BJ (cell line): ENCODE measurements at regions of chr9 and their contacts with region 1.

Region 1: GRCh38 chr9:21317956-21318923 is 13.1 kb upstream of the IFNA5 start:
- DNase-seq: no peak
- H3K4me3 ChIP-seq: no peak overlapping the region
- H3K27me3 ChIP-seq: no peaks in the 10 kb centered on the region
- CTCF ChIP-seq: peak; percentile 69

Region 2: GRCh38 chr9:21294325-21294724 is 23.9 kb before region 1 on chr9:
- CTCF ChIA-PET with region 1: no interaction called
- POLR2A ChIA-PET with region 1: no interaction called
- DNase-seq: no peak
- H3K4me3 ChIP-seq: no peak overlapping the region
- H3K27me3 ChIP-seq: peaks cover 3% of the 10 kb centered on the region; the same call in 1 of the 2 replicates
- CTCF ChIP-seq: no peak

Region 3: DNA sequence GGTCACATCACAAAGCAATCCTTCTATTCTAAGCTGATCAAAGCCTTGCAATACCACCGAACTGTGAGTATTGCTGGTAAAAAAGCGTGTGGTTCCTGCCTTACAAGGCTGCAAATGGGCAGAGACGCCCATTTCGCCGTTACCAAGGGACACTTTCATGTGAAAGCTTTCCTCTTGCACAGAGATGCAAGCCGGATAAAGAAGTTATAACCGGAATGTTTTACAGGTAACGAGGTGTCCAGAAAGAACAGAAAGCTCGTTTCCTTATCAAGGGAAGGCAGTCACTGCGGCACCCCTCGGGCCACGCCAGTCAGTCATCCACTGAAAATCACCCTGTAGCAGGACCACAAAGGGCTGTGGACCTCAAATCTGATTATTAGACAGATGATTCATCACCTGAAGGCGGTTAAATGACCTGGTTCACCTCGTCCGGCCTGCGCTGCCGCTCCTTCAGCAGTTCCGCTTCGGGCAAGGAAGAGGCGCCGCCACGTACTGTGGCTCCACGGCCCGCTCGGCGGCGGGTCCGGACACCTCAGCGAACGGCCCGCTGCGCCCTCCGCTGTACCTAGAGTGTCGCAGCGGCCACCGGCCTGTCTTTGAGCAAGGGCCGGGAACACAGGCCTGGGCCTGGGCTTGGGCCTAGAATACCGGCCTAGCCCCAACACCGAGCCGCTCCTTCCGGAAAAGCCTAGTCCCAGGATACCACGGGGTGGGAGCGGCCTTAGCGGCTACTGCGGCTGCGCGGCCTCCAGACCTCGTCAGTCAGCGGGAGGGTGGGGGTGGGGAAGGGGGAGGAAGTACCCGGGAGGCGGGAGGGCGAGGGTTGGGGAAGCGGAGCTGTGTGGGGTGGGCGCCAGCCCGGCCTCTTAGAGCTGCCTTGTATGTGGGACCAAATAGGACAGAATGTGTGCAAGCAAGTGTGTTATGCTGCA is 16.7 kb after region 1 on chr9 and contains the start of gene KLHL9:
- CTCF ChIA-PET with region 1: interaction called, 16 read pairs
- POLR2A ChIA-PET with region 1: no interaction called
- DNase-seq: peak; percentile 49
- H3K4me3 ChIP-seq: peak within 1 kb of the TSS; percentile 66
- H3K27me3 ChIP-seq: no peaks in the 10 kb centered on the region; the same call in 1 of the 2 replicates
- CTCF ChIP-seq: no peak
- polyA plus RNA-seq, gene KLHL9: 14.4 and 25.9 TPM in 2 replicates